ENCODE measurements at regions of chr11 and their contacts with region 1.

Region 1: DNA sequence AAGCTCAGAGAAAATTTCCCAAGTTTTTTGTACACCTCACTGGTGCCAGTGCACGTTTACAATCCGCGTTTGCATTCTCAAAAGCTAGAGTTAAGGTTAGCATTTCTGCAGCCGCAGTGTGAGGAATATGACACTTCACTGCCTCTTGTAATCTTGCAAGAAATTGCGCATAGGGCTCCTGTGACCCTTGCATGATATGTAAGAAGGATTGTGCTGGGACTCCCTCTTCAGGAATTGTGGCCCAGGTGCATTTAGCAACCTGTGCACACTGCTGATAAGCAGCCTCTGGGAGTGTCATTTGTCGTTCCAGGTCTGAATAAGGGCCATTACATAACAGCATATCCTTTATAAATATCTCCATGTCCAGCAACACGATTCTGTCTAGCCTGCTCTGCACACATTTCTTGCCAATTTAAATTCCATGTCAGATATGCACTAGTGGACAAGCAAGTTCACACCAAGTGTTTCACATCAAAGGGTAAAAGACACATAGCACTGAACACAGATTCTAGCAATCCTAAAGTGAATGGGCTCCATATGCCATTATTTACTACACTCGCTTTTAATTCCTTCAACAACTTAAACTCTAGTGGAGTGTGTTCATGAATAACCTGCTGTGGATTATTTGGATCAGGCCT is 69.2 kb upstream of the INCENP start:
- DNase-seq: peak; percentile 78
- ATAC-seq: peak; percentile 66; the same call in 2 of the 3 replicates
- H3K4me3 ChIP-seq: no peak overlapping the region
- H3K27ac ChIP-seq: no peak overlapping the region
- H3K4me1 ChIP-seq: peaks cover 27% of the 10 kb centered on the region
- H3K27me3 ChIP-seq: peaks cover 0 to 3% of the 10 kb centered on the region in 2 experiments; a peak in 2 of 5 replicates
- CTCF ChIP-seq: peak; percentile 91
- EP300 ChIP-seq: no peak
- POLR2A ChIP-seq: no peak
- RAD21 ChIP-seq: peak; percentile 82

Region 2: DNA sequence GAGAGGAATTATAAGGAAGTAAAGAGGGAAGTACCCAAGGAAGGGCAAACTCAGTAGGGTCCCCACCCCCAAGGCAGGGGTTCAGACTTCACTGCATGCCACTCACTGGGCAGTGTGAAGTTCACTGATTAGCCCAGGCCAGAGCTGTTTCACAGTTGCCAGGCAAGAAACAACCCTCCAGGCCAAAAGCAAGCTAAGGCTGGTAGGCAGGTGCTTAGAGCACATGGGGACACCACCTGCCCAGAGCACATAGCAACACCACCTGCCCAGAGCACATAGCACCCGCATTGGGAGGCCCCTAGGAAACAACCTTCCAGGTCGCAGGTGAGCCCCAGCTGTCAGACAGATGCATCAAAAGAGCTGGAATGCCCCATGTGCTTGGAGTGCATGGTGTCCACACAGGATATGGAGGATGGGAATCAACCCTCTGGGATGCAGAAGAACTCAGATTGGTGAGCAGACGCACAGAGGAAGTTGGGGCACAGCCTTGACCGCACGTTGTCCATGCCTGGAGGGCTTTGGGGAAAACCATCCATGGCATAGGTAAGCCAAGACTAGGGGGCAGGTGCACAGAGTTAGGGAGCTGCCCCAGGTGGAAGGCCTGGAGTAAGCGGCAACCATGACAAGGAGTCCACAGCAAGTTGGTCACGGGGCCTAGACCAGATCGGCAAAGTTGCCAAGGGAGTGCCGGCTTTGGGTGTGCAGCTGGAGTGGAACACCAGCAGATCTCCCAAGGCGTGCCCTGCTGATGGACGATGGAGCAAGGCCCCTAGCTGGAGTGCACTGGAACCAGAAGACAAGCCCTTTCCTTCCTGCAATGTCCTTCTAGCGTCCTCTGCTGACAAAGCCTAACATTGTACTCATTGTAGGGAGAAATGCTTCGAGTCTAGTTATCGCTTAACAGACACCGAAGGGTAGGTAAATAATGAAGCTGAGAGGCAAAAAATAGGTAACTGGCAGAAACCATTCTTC is 670.0 kb before region 1 on chr11:
- CTCF ChIA-PET with region 1: no interaction called
- POLR2A ChIA-PET with region 1: no interaction called
- in situ Hi-C with region 1: no loop called
- intact Hi-C with region 1: no loop called
- DNase-seq: peak; percentile 39
- ATAC-seq: peak; percentile 82
- H3K4me3 ChIP-seq: no peak overlapping the region
- H3K27ac ChIP-seq: no peak overlapping the region
- H3K4me1 ChIP-seq: peaks cover 9% of the 10 kb centered on the region
- H3K27me3 ChIP-seq: no peaks in the 10 kb centered on the region
- CTCF ChIP-seq: peak; percentile 83
- EP300 ChIP-seq: no peak
- POLR2A ChIP-seq: no peak
- RAD21 ChIP-seq: 0 out of 2 replicates have a peak, but pooled peaks have one; percentile 18

Region 3: GRCh38 chr11:62004473-62004872 is 50.1 kb before region 1 on chr11:
- CTCF ChIA-PET with region 1: no interaction called
- POLR2A ChIA-PET with region 1: interaction called, 3 read pairs
- in situ Hi-C with region 1: no loop called
- intact Hi-C with region 1: loop called (anchors 10 kb)
- DNase-seq: no peak
- ATAC-seq: no peak
- H3K4me3 ChIP-seq: no peak overlapping the region
- H3K27ac ChIP-seq: peak overlapping the region; percentile 26
- H3K4me1 ChIP-seq: peaks cover 67% of the 10 kb centered on the region
- H3K27me3 ChIP-seq: no peaks in the 10 kb centered on the region
- CTCF ChIP-seq: no peak
- EP300 ChIP-seq: no peak
- POLR2A ChIP-seq: no peak
- RAD21 ChIP-seq: no peak